ENCODE measurements at regions of chr6 and their contacts with region 1.

Region 1: DNA sequence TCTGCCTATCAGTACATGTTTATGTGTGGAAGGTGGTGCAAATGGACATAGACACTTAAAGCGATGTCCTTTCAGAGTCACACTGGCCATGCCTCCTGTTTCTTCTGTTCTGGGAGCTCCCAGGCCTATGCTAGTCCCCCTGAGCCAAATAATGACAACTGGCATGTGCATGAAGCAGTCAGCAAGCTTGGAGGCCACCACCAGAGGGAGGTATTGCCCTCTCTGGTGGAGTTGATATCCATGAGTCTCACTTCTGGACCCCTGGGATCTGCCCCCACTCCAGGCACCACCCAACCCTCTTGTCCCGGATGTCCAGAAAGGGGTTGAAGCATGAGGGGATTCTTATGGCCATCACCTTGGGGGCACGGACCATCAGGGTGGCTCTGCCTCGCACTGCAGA is 172.2 kb downstream of the AIG1 start:
- DNase-seq: peak; percentile 56 to 72 (median 62)
- ATAC-seq: peak; percentile 93
- H3K4me3 ChIP-seq: no peak overlapping the region
- H3K27ac ChIP-seq: no peak overlapping the region
- H3K4me1 ChIP-seq: peaks cover 0 to 7% of the 10 kb centered on the region in 2 experiments; a peak in 3 of 5 replicates
- H3K27me3 ChIP-seq: no peaks in the 10 kb centered on the region
- CTCF ChIP-seq: peak; percentile 66 to 81 (median 68)
- EP300 ChIP-seq: no peak
- POLR2A ChIP-seq: no peak
- RAD21 ChIP-seq: peak; percentile 22 to 68; a peak in 2 of 4 replicates

Region 2: DNA sequence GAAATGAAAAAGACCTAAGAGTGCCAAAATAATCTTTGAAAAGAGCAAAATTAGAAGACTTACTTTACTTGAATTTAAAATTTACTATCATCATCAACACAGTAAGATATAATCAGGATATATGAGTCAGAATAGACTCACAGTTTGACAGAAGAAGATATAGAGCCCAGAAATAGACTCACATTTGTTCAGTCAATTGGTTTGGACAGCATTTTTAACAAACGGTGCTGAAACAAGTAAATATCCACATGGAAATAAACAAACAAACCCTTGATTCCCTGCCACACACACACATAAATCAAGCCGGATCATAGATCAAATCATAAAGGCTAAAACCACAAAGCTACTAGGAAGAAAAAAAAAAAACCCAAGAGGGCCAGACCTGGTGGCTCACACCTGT is 640.0 kb before region 1 on chr6:
- CTCF ChIA-PET with region 1: no interaction called
- POLR2A ChIA-PET with region 1: no interaction called
- in situ Hi-C with region 1: no loop called
- intact Hi-C with region 1: no loop called
- DNase-seq: no peak
- ATAC-seq: no peak
- H3K4me3 ChIP-seq: no peak overlapping the region
- H3K27ac ChIP-seq: no peak overlapping the region
- H3K4me1 ChIP-seq: no peaks in the 10 kb centered on the region
- H3K27me3 ChIP-seq: no peaks in the 10 kb centered on the region
- CTCF ChIP-seq: no peak
- EP300 ChIP-seq: no peak
- POLR2A ChIP-seq: no peak
- RAD21 ChIP-seq: no peak

Region 3: DNA sequence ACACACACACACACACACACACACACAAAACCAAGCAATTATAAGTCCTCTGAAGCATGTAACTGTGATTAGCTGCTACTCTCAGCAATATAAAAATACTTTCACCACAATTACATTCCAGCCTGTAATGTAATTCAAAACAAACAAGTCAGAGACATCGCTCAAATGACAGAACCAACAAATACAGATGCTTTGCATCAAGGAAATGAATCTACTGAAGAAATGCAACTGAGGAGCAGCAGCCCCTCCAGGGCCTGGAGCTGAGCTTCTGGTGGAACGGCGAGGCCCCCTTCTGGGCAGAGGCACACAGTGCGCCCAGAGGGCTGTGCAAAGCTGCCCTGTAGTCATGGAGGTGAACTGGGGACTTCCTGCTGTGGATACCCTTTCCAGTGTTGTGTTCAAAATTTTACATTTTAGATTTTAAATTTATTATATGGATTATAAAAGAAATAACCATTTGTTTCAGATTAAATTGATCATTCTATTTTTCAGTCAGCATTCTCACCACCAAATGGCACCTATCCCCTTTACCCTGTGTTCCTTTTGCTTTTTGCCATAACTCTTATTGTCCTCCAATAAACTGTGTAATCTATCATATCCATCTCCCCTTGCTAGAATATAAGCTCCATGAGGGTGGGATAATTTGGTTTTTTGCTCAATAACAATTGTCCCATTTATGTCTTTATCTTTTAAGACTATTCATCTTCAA is 194.4 kb after region 1 on chr6:
- CTCF ChIA-PET with region 1: no interaction called
- POLR2A ChIA-PET with region 1: no interaction called
- in situ Hi-C with region 1: no loop called
- intact Hi-C with region 1: loop called (anchors 1 kb)
- DNase-seq: peak; percentile 67 to 80 (median 78)
- ATAC-seq: peak; percentile 100
- H3K4me3 ChIP-seq: no peak overlapping the region
- H3K27ac ChIP-seq: no peak overlapping the region
- H3K4me1 ChIP-seq: no peaks in the 10 kb centered on the region
- H3K27me3 ChIP-seq: no peaks in the 10 kb centered on the region
- CTCF ChIP-seq: peak; percentile 86 to 98 (median 94)
- EP300 ChIP-seq: no peak
- POLR2A ChIP-seq: peak; percentile 46
- RAD21 ChIP-seq: peak; percentile 93 to 97